ENCODE measurements at regions of chr4 and their contacts with region 1.

Region 1: DNA sequence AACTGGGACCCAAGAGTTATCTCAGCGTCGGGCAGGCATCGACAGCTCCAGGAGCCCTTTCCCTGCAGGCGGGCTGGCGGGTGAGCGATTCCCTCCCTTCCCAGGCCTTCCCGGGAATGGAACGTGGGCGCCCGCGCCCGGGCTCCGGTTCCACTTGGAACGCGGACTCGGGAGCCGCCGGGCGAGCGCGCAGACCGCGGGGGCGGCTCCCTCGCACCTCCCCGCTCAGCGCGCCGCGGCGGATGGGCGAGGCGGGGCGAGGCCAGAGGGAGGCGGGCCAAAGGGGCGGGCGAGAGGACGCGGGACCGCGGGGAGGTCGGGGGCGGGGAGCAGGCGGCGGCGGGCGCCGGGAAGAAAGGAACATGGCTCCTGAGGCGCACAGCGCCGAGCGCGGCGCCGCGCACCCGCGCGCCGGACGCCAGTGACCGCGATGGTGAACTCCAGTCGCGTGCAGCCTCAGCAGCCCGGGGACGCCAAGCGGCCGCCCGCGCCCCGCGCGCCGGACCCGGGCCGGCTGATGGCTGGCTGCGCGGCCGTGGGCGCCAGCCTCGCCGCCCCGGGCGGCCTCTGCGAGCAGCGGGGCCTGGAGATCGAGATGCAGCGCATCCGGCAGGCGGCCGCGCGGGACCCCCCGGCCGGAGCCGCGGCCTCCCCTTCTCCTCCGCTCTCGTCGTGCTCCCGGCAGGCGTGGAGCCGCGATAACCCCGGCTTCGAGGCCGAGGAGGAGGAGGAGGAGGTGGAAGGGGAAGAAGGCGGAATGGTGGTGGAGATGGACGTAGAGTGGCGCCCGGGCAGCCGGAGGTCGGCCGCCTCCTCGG is at the start of gene PKD2:
- DNase-seq: peak; percentile 82 to 98 (median 88)

Region 2: DNA sequence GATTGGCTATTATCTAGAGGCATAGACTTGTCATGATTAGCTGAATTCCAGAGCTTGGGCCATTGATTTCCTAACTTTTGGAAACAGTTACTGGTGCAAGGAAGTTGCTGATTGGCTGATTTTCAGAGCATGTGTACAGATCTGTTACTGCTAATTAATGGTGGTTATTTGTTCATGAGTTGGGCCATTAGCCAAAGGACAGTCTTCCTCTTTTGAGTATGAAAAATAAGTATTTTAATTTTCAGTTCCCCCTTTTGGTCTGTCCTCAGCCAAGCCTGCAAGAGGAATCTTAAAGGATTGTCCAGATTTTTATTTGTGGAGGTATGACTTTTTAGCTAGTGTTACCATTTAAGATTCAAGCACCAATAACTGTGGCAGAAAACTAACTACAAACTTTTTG is 406.2 kb before region 1 on chr4:
- intact Hi-C with region 1: no loop called
- DNase-seq: no peak

Region 3: GRCh38 chr4:87973283-87974169 is 34.0 kb before region 1 on chr4:
- intact Hi-C with region 1: loop called (anchors 1 kb)
- DNase-seq: peak in 8 of 10 donors; percentile 41 to 90 (median 75)

Region 4: DNA sequence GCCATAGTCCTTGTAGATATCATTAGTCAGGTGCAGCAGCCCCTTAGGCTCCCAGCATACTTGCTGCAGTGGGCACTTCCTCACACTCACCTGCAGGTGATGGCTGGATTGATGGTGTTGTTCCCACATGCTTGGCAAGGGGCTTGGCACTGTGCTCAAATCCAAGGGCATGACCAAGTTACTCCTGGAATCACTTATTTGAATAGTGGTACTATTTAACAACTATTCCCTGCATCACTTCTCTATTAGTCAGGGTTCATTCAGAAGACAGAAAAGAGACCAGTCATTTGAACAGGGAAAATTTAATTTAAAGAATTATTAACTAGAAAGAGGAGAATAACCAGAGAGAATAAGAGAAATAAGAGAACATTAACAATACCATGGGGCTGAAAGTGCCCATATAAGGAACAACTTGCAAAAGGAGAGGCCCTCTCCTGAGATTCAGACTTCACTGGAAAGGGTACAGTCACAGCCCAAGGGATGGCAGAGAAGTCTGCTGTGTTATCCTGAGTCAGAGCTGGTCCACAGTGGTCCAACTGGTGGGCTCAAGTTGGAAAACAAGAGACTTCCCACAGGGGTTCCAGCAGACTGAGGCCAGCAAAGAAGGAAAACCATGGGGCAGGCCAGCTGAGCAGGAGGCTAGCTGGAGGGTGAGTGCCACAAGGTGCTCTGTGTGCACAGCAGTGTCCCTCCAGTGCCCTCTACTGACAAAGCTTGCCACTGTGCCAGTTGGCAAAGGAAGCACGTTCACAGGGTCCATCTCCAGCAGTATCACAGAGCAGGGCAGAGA is 22.2 kb before region 1 on chr4:
- intact Hi-C with region 1: loop called (anchors 1 kb)
- DNase-seq: peak; percentile 45 to 96 (median 76)

Region 5: GRCh38 chr4:88858752-88859151 is 851.2 kb after region 1 on chr4:
- intact Hi-C with region 1: no loop called
- DNase-seq: no peak

Measured in posterior cingulate gyrus (tissue), 11 donors.